Posterior vena cava (tissue), 2 donors: ENCODE measurements at regions of chr4 and their contacts with region 1.

Region 1: GRCh38 chr4:139030614-139031235 is 15.1 kb downstream of the NOCT start:
- DNase-seq: no peak

Region 2: DNA sequence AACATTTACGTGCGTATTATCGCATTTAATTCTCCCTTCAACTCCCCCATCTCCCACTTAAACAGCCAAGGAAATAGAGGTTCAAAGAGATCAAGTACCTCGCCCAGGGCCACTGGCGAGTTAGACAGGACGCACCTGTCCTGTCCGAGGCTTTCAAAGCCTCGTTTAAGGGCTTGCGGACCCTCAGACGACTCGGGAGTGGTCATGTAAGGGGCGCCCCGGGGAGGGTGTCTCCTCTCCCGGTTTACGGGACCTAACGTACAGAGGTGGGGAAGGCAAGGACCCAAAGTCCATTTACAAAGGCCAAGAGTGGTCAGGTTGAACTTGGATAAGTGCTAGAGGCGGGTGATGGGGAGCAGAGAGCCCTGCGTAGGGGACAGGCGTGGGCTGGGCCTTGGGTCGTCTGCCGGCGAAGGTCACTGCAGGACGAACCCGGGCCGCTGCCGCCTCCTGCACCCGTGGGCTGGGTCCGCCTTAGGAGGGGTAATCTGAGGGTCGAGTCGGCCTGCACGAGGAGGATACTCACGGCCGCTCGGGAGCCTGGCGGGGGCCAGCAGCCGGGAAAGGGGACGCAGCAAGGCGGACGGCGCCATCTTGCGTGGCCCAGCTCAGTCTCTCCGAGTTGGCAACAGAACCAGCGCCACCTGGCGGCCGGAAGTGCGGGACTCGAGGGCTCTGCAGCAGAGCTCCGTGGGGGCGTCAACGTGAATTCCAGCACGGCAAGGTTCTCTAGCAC is 264.6 kb after region 1 on chr4:
- intact Hi-C with region 1: loop called in 1 of 2 experiments (anchors 5 kb)
- DNase-seq: peak; percentile 100

Region 3: DNA sequence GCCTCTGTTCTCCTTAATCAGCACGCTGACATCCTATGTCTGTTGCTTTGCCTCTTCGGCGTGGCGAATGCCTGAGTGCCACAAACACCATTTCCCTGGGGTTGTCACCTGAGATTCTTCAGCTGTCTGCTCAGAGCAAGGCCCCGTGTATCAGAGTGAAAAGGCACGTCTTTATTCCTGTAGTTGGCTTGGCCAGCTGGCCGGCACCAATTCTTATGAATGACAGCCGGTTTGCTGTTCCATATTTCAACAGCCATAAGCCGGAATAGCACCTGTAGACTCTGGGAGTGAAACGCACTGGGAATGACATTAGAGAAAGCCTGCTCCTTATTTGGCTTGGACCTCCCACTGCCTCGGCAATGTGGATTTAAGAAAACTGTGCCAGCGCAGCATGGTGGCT is 724.2 kb after region 1 on chr4:
- intact Hi-C with region 1: loop called in 1 of 2 experiments (anchors 5 kb)
- DNase-seq: no peak